B cell (primary cell): ENCODE measurements at regions of chr14 and their contacts with region 1.

Region 1: DNA sequence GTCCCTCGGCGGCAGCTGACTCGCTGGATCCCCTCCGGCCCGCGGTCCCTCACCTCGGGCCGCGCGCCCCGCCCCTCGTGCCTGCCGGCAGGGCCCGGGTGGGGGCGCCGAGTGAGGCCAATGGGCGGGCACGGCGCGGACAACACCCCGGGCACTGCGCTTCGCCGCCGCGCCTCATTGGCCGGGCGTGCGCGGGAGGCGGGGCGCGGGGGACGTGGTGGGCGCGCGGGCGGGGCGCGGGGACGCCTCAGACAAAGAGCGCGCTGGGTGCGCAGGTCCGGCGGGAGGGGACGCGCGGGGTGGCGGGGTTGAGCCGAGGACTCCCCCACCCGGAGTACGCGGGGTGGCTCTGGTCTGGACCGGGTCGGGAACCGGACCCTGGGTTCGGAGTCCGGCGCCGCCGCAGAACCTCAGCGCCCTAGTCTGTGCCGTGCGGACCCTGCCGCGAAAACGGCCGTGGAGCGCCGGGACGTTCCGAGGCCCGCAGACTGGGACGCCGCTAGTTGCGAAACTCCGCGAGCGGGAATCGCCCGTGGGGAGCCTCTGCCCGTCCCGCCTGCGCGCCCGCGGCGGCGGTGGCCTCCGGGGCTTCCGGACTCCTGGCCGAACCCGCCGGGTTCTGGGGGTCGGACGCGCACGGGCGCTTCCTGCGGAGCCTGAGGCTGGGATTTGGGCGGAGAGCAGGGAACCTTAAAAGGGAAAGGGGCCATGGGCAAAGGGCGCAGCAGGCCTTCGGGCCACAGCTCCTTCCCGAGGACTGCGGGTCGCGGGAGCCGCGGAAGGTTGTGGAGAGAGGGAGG is at the start of gene SLC25A29:
- DNase-seq: peak; percentile 84
- ATAC-seq: peak; percentile 94
- H3K4me3 ChIP-seq: peak within 1 kb of the TSS in 4 of 5 experiments; percentile 70 to 81 (median 80)
- H3K4me3 Mint-ChIP-seq: peak within 1 kb of the TSS; percentile 94
- H3K27ac ChIP-seq: peak within 1 kb of the TSS in 1 of 2 donors; percentile 46
- H3K27ac Mint-ChIP-seq: peak within 1 kb of the TSS; percentile 83
- H3K4me1 ChIP-seq: peaks cover 20 to 32% of the 10 kb centered on the region in 2 donors
- H3K4me1 Mint-ChIP-seq: peaks cover 21% of the 10 kb centered on the region
- H3K27me3 ChIP-seq: peaks cover 0 to 3% (median 0%) of the 10 kb centered on the region in 4 experiments
- H3K27me3 Mint-ChIP-seq: no peaks in the 10 kb centered on the region
- CTCF ChIP-seq: no peak
- total RNA-seq, gene SLC25A29: 99.9 and 108 TPM in 2 replicates

Region 2: DNA sequence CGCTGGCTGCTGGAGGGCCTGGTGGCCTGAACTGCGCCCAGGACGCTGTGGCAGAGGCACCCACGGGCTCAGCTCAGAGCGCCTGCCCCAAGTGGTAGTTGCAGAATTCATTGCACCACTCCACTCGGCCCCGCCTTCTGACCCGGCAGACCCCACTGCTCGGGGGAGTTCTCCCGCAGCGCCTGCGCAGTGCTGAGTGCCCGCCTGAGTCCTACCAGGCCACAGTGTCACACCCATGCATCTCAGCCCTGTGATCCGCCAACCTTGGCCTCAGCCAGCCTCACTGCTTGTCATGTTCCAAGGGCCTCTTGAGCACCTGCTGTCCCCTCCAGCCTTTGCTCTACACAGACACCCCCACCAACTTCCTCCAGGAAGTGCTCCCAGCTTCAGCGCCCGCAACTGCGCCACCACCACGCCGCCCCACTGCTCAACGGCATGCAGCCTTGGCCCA is 159.4 kb before region 1 on chr14:
- CTCF ChIA-PET with region 1: no interaction called
- POLR2A ChIA-PET with region 1: no interaction called
- intact Hi-C with region 1: loop called (anchors 5 kb)
- DNase-seq: peak; percentile 71
- ATAC-seq: peak; percentile 74
- H3K4me3 ChIP-seq: peak overlapping the region in 1 of 5 experiments; percentile 25
- H3K4me3 Mint-ChIP-seq: peak overlapping the region; percentile 78
- H3K27ac ChIP-seq: no peak overlapping the region
- H3K27ac Mint-ChIP-seq: peak overlapping the region; percentile 92
- H3K4me1 ChIP-seq: peaks cover 22 to 24% of the 10 kb centered on the region in 2 donors
- H3K4me1 Mint-ChIP-seq: peaks cover 27% of the 10 kb centered on the region
- H3K27me3 ChIP-seq: no peaks in the 10 kb centered on the region
- H3K27me3 Mint-ChIP-seq: no peaks in the 10 kb centered on the region
- CTCF ChIP-seq: no peak